Esophagus muscularis mucosa (tissue), 4 donors: ENCODE measurements at regions of chr3 and their contacts with region 1.

Region 1: GRCh38 chr3:100590114-100590839 is 19.1 kb upstream of the ADGRG7 start:
- DNase-seq: no peak
- H3K4me3 ChIP-seq: peak overlapping the region in 2 of 4 donors; percentile 10 to 36
- H3K27ac ChIP-seq: no peak overlapping the region
- H3K4me1 ChIP-seq: peaks cover 0 to 4% (median 3%) of the 10 kb centered on the region in 4 donors
- H3K27me3 ChIP-seq: no peaks in the 10 kb centered on the region
- CTCF ChIP-seq: peak; percentile 87 to 92 (median 90)
- EP300 ChIP-seq: no peak
- POLR2A ChIP-seq: no peak

Region 2: GRCh38 chr3:99825004-99825640 is 765.2 kb before region 1 on chr3:
- intact Hi-C with region 1: loop called (anchors 5 kb)
- DNase-seq: no peak
- H3K4me3 ChIP-seq: no peak overlapping the region
- H3K27ac ChIP-seq: no peak overlapping the region
- H3K4me1 ChIP-seq: peaks cover 0 to 19% (median 3%) of the 10 kb centered on the region in 4 donors
- H3K27me3 ChIP-seq: no peaks in the 10 kb centered on the region
- CTCF ChIP-seq: no peak
- EP300 ChIP-seq: no peak
- POLR2A ChIP-seq: no peak

Region 3: GRCh38 chr3:100316641-100317069 is 273.6 kb before region 1 on chr3:
- intact Hi-C with region 1: loop called (anchors 2 kb)
- DNase-seq: no peak
- H3K4me3 ChIP-seq: peak overlapping the region in 1 of 4 donors; percentile 11
- H3K27ac ChIP-seq: peak overlapping the region in 2 of 4 donors; percentile 21 to 24
- H3K4me1 ChIP-seq: peaks cover 0 to 9% (median 7%) of the 10 kb centered on the region in 4 donors
- H3K27me3 ChIP-seq: no peaks in the 10 kb centered on the region
- CTCF ChIP-seq: peak; percentile 67 to 78 (median 71)
- EP300 ChIP-seq: no peak
- POLR2A ChIP-seq: no peak

Region 4: DNA sequence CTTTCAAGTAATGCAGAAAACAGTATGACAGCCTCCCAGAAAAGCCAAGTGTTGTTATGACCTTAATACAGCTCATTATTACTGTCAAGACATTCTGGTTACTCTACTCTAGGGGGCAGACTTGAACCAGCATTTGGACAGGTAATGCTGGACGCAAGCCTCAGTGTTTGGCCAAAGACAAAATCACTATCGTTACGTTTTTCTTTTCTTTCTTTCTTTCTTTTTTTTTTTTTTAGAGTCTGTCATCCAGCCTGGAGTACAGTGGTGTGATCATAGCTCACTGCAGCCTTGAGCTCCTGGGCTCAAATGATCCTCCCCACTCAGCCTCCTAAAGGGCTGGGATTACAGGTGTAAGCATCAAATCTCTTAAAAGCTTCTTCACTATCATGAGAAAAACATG is 127.3 kb before region 1 on chr3:
- intact Hi-C with region 1: loop called (anchors 1 kb)
- DNase-seq: peak; percentile 17
- H3K4me3 ChIP-seq: no peak overlapping the region
- H3K27ac ChIP-seq: no peak overlapping the region
- H3K4me1 ChIP-seq: no peaks in the 10 kb centered on the region
- H3K27me3 ChIP-seq: no peaks in the 10 kb centered on the region
- CTCF ChIP-seq: peak; percentile 58 to 68 (median 66)
- EP300 ChIP-seq: no peak
- POLR2A ChIP-seq: no peak

Region 5: DNA sequence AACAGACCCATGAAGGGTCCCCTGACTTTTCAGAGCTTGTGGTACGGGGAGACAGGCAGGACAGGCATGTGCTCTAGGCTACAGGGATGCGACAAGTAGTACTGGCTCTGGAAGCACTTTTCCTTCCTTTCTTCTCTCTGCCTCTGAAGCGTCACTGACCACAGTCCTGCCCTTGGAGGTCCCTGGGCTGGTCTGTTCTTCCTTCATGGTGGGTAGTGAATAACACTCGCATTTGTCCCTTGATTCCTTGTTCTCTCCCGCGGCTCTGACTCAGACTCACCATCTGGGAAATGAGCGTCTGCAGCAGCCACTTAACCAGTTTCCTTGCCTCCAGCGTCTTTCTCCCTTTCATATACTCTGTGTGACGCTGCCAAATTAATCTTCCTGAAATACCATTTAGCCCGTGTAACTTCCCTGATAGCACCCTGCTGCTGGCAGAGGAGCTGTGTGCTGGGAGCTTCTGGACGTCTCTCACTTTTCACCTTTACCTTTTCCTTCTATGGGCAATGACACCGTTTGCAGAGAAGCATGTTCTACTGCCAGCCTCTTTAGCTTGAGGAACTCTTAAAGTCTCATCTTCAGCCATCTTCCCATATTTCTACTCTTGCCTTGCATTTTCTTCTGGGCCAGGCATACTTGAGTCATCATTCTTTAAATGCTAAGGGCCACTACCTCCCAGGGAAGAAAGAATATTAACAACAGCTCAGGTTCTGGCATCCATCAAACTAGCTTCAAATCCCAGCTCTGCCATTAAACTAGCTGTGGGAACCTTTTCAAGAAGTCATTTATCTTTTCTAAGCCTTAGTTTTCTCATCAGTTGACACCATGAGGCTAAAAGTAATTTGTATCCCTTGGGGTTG is 64.3 kb before region 1 on chr3:
- intact Hi-C with region 1: no loop called
- DNase-seq: no peak
- H3K4me3 ChIP-seq: no peak overlapping the region
- H3K27ac ChIP-seq: peak overlapping the region; percentile 9 to 52 (median 46)
- H3K4me1 ChIP-seq: peaks cover 3 to 16% (median 13%) of the 10 kb centered on the region in 4 donors
- H3K27me3 ChIP-seq: no peaks in the 10 kb centered on the region
- CTCF ChIP-seq: no peak
- EP300 ChIP-seq: no peak
- POLR2A ChIP-seq: no peak